PC-3 (cell line): ENCODE measurements at regions of chr10 and their contacts with region 1.

Region 1: GRCh38 chr10:74189999-74190421 is 39.0 kb downstream of the ADK start:
- DNase-seq: peak; percentile 100
- ATAC-seq: peak; percentile 90
- H3K4me3 ChIP-seq: peak overlapping the region; percentile 58
- H3K27ac ChIP-seq: peak overlapping the region; percentile 75
- H3K4me1 ChIP-seq: peaks cover 81% of the 10 kb centered on the region
- H3K27me3 ChIP-seq: no peaks in the 10 kb centered on the region
- CTCF ChIP-seq: no peak

Region 2: GRCh38 chr10:74176380-74177139 is 13.4 kb before region 1 on chr10:
- CTCF ChIA-PET with region 1: interaction called, 6 read pairs
- POLR2A ChIA-PET with region 1: interaction called, 19 read pairs
- intact Hi-C with region 1: loop called (anchors 1 kb)
- DNase-seq: peak; percentile 100
- ATAC-seq: peak; percentile 94
- H3K4me3 ChIP-seq: peak overlapping the region; percentile 69
- H3K27ac ChIP-seq: peak overlapping the region; percentile 76
- H3K4me1 ChIP-seq: peaks cover 40% of the 10 kb centered on the region
- H3K27me3 ChIP-seq: no peaks in the 10 kb centered on the region
- CTCF ChIP-seq: 0 out of 2 replicates have a peak, but pooled peaks have one; percentile 6

Region 3: DNA sequence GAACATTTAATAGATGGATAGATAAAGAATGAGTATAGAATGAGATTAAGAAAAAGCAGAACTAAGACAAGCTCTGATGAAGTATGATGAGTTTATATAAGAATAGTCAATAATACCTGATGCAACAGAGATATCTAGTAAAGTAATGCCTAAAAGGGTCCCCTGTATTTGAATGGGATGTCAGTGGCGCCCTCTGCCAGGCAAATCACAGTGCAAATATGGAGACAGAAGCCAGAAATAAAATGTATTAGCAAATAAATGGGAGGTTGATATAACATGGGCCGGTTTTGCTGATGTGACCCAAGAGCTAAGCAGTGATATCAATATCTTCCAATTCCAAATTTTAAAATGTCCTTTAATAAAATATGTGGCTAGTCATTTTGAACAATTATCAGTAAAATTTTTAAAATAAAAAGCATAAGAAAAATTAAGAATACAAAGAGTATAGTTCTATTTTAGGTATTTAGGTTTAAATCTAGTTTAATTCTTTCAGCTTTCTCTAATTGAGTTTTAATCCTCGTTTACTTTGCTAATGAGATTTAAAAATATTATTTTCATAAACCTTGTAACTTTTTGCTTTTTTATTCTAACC is 23.7 kb after region 1 on chr10:
- CTCF ChIA-PET with region 1: interaction called, 9 read pairs
- POLR2A ChIA-PET with region 1: interaction called, 4 read pairs
- intact Hi-C with region 1: loop called (anchors 1 kb)
- DNase-seq: peak; percentile 95
- ATAC-seq: peak; percentile 91
- H3K4me3 ChIP-seq: no peak overlapping the region
- H3K27ac ChIP-seq: no peak overlapping the region
- H3K4me1 ChIP-seq: no peaks in the 10 kb centered on the region
- H3K27me3 ChIP-seq: no peaks in the 10 kb centered on the region
- CTCF ChIP-seq: peak; percentile 100; the same call in 1 of the 2 replicates

Region 4: GRCh38 chr10:74227697-74228424 is 37.9 kb after region 1 on chr10:
- CTCF ChIA-PET with region 1: no interaction called
- POLR2A ChIA-PET with region 1: interaction called, 6 read pairs
- intact Hi-C with region 1: loop called (anchors 1 kb)
- DNase-seq: peak; percentile 96
- ATAC-seq: peak; percentile 41
- H3K4me3 ChIP-seq: no peak overlapping the region
- H3K27ac ChIP-seq: peak overlapping the region; percentile 55
- H3K4me1 ChIP-seq: peaks cover 59% of the 10 kb centered on the region
- H3K27me3 ChIP-seq: no peaks in the 10 kb centered on the region
- CTCF ChIP-seq: no peak